Body of pancreas (tissue), 4 donors: ENCODE measurements at regions of chr2 and their contacts with region 1.

Region 1: GRCh38 chr2:67733517-67733916 is 329.3 kb downstream of the C1D start:
- DNase-seq: peak; percentile 51 to 78 (median 65)
- ATAC-seq: peak; percentile 89
- H3K4me3 ChIP-seq: no peak overlapping the region
- H3K27ac ChIP-seq: no peak overlapping the region
- H3K4me1 ChIP-seq: peaks cover 5% of the 10 kb centered on the region
- H3K27me3 ChIP-seq: no peaks in the 10 kb centered on the region
- CTCF ChIP-seq: peak; percentile 53 to 75 (median 69)
- POLR2A ChIP-seq: no peak

Region 2: GRCh38 chr2:67840460-67841068 is 107.0 kb after region 1 on chr2:
- intact Hi-C with region 1: loop called (anchors 10 kb)
- DNase-seq: peak; percentile 86 to 89 (median 86)
- ATAC-seq: peak; percentile 89
- H3K4me3 ChIP-seq: no peak overlapping the region
- H3K27ac ChIP-seq: no peak overlapping the region
- H3K4me1 ChIP-seq: peaks cover 43% of the 10 kb centered on the region
- H3K27me3 ChIP-seq: no peaks in the 10 kb centered on the region
- CTCF ChIP-seq: peak; percentile 78 to 99 (median 98)
- POLR2A ChIP-seq: no peak